Activated CD8-positive, alpha-beta T cell treated with anti-CD3 and anti-CD28 coated beads, Interleukin-2, amount 10 ng/mL, durations not matched to agents 7 days and 5 days (primary cell): ENCODE measurements at regions of chr20 and their contacts with region 1.

Region 1: GRCh38 chr20:33791959-33792597 is 19.1 kb upstream of the CHMP4B start:
- DNase-seq: peak; percentile 61
- ATAC-seq: peak; percentile 73
- H3K4me3 Mint-ChIP-seq: no peak overlapping the region
- H3K27ac Mint-ChIP-seq: no peak overlapping the region
- H3K4me1 Mint-ChIP-seq: peaks cover 22% of the 10 kb centered on the region
- H3K27me3 Mint-ChIP-seq: no peaks in the 10 kb centered on the region

Region 2: GRCh38 chr20:33697129-33697528 is 94.9 kb before region 1 on chr20:
- CTCF ChIA-PET with region 1: no interaction called
- POLR2A ChIA-PET with region 1: no interaction called
- DNase-seq: no peak
- ATAC-seq: no peak
- H3K4me3 Mint-ChIP-seq: no peak overlapping the region
- H3K27ac Mint-ChIP-seq: no peak overlapping the region
- H3K4me1 Mint-ChIP-seq: peaks cover 1% of the 10 kb centered on the region
- H3K27me3 Mint-ChIP-seq: no peaks in the 10 kb centered on the region

Region 3: DNA sequence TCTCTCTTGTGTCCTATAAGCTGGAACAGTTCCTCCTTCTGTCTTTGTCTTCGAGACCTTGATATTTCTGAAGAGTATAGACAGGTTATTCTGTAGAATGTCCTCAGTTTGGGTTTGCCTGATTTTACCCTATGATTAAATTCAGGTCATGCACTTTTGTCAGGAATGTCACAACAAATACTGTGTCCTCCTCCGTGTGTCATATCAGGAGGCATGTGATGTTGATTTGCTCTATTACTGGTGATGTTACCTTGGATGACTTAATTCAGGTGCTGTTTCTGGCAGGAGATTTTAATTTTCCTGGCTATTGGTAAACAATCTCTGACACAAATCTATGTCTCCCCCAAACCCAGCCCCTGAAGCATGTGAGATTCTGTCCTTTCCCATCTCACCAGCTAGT is 14.3 kb before region 1 on chr20:
- CTCF ChIA-PET with region 1: interaction called, 14 read pairs
- POLR2A ChIA-PET with region 1: no interaction called
- DNase-seq: no peak
- ATAC-seq: no peak
- H3K4me3 Mint-ChIP-seq: no peak overlapping the region
- H3K27ac Mint-ChIP-seq: no peak overlapping the region
- H3K4me1 Mint-ChIP-seq: peaks cover 17% of the 10 kb centered on the region
- H3K27me3 Mint-ChIP-seq: no peaks in the 10 kb centered on the region

Region 4: DNA sequence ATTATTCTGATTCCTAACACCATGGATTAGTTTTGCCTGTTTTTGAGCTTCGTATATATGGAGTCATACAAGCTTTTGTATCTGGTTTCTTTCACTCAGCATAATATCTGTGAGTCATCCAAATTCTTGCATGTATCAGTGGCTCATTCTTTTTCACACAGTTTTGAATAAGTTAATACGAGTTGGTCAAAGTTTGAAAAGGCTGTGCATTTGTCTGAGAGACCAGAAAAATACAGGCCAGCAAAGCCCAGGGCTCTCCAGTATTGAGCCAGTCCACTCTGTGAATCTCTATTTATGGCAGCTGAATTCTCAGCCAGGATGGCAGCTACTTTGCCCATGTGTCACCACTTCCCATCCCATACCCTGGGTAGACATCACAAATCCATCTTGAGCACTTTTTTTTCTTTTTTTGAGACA is 11.9 kb after region 1 on chr20:
- CTCF ChIA-PET with region 1: interaction called, 12 read pairs
- POLR2A ChIA-PET with region 1: no interaction called
- DNase-seq: no peak
- ATAC-seq: no peak
- H3K4me3 Mint-ChIP-seq: no peak overlapping the region
- H3K27ac Mint-ChIP-seq: no peak overlapping the region
- H3K4me1 Mint-ChIP-seq: no peaks in the 10 kb centered on the region
- H3K27me3 Mint-ChIP-seq: peaks cover 4% of the 10 kb centered on the region

Region 5: DNA sequence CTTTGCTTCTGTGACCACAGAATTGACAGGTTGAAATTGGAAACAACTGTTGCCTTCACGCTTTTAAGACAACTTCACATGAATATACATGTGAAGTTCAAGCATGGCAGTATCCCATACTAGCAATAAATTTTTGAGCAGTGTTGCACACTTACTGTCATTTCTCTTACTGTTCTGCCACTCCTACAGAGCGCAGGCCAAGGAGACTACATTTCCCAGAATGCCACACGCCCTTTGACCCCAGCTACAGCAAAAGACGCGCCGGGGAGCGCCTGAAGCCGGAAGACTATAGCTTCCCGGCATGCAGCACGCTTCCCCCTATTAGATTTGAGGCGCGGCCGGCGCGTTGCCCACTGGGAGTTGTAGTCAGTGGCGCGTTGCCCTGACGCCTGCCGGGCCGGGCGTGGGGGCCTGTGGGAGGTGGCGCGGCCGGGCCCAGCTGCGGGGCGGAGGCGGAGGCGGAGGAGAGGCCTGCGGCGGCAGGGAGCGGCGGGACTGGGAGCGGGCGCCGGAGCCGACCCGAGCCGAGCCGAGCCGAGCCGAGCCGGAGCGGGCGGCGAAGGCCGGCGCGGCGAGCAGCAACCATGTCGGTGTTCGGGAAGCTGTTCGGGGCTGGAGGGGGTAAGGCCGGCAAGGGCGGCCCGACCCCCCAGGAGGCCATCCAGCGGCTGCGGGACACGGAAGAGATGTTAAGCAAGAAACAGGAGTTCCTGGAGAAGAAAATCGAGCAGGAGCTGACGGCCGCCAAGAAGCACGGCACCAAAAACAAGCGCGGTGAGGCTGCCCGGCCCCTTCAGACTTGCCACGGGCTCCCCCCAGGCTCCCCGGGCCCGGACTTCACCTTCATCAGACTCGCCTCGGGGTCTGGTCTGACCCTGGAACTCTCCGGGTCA is 19.1 kb after region 1 on chr20 and contains the start of gene CHMP4B:
- CTCF ChIA-PET with region 1: interaction called, 37 read pairs
- POLR2A ChIA-PET with region 1: no interaction called
- DNase-seq: peak; percentile 99
- ATAC-seq: peak; percentile 98
- H3K4me3 Mint-ChIP-seq: peak within 1 kb of the TSS; percentile 92
- H3K27ac Mint-ChIP-seq: peak within 1 kb of the TSS; percentile 93
- H3K4me1 Mint-ChIP-seq: peaks cover 36% of the 10 kb centered on the region
- H3K27me3 Mint-ChIP-seq: no peaks in the 10 kb centered on the region
- total RNA-seq, gene CHMP4B: 86.7 to 93.2 TPM

Region 6: DNA sequence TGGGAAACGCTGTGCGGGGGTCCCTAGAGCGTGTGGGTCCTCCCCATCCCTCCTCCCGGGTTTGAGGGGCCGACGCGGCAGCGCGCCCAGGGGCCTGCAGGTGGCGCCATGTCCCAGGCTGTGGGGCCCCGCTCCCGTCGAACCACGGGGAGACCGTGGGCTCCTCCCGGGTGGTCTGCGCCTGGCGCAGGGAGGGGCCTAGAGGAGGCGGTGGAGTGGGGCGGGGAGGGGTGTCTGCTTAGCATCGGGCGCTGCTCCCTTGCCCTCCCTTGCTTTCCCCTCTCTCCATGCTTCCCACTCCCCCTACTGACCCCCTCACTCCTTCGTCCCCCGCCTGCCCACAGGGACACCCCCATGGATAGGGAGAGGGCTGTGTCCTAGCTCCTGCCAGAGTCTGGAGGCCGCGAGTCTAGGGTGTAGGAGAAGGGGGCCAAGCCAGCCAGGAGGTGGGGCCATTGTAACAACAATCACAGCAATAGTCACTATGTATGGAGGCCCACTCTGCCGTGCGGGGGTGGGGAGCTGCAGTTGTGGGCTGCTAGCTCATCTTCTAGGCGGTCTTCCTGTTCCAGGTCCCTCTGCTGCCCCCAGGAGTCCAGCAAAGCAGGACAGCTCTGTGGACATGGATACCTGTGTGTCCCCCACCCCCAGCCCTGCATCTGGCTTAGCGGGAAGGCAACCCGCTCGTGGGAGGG is 70.8 kb after region 1 on chr20:
- CTCF ChIA-PET with region 1: interaction called, 13 read pairs
- POLR2A ChIA-PET with region 1: no interaction called
- DNase-seq: peak; percentile 63
- ATAC-seq: peak; percentile 52
- H3K4me3 Mint-ChIP-seq: no peak overlapping the region
- H3K27ac Mint-ChIP-seq: no peak overlapping the region
- H3K4me1 Mint-ChIP-seq: peaks cover 38% of the 10 kb centered on the region
- H3K27me3 Mint-ChIP-seq: no peaks in the 10 kb centered on the region

Region 7: DNA sequence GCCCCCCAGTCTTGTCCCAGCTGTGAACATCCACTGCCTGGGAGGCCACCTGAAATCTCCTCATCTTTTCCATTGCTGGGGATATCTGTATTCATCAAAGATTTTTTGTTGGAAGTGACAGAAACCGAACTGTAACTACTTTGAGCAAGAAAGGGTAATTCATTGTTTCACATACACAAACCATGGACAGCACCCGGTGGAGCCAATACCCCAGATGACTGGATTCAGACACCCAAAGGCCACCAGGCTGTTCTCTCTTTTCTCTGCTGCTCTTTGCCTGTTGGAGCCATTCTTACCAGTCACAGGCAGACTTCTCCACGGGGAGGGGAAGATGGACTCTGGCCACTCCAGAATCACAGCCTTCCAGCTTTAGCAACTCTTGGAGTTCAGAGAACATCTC is 189.9 kb after region 1 on chr20:
- CTCF ChIA-PET with region 1: no interaction called
- POLR2A ChIA-PET with region 1: no interaction called
- DNase-seq: no peak
- ATAC-seq: no peak
- H3K4me3 Mint-ChIP-seq: no peak overlapping the region
- H3K27ac Mint-ChIP-seq: no peak overlapping the region
- H3K4me1 Mint-ChIP-seq: no peaks in the 10 kb centered on the region
- H3K27me3 Mint-ChIP-seq: peaks cover 18% of the 10 kb centered on the region